MCF 10A (cell line): ENCODE measurements at regions of chr9 and their contacts with region 1.

Region 1: DNA sequence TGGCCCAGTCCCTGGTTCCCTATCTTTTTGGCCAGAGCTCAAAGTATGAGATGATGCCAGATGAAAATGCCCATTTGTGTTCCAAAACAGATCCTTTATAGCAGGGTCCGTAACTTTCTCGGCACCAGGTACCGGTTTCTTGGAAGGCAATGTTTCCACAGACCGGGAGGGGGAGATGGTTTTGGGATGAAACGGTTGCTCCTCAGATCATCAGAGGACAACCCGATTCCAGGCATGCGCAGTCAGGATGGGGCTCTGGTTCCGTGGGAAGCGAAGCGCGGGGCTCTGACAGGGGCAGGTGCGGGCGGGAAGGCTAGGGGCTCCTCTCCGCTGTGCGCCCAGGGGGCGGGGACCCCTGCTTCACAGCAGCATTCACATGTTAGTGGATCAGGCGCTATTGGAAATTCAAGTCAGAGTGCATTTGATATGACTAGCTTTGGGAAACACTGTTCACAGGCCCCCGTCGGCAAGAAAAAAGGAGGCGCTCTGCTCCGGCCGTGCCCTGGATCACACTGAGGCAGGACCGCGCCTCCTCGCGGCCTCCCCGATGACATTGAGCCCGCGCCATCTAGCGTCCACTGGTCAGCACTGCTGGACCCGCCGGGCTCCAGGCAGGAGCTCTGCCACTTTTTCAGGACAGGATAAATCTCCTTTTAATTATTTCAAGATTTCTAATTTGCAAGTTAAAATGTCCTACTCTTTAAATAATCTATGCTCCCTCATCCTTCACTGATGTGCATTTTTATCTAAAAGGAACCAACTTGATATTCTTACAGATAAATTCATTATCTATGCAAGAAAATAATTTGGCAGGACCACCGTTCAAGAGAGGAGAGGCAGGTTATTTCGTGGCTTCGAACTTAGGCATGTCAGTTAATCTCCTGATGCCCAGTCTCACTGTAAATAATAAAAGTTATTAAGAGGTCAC is 190.0 kb downstream of the FANCC start:
- DNase-seq: peak; percentile 81
- H3K4me3 Mint-ChIP-seq: no peak overlapping the region
- H3K27ac Mint-ChIP-seq: no peak overlapping the region
- H3K4me1 Mint-ChIP-seq: peaks cover 5% of the 10 kb centered on the region
- H3K27me3 Mint-ChIP-seq: no peaks in the 10 kb centered on the region
- CTCF ChIP-seq: peak; percentile 97

Region 2: DNA sequence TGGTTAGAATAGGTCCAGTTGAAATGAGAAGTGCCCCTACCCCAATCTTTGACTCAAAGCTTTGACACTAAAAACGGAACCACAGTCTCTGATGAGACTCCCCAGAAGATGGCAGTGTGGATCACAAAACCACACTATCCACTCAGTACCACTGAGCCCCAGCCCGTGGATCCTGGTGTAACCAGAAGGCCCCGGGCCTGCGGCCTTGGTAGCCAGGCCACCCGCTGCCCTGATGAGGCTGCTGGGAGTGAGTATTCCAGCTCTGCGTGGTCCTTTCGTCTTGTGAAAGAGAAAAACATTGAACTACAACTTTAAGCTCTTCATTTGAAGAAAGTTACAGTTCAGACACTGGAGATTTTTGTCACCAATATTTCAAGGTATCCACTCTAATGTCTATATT is 446.0 kb before region 1 on chr9:
- CTCF ChIA-PET with region 1: interaction called, 457 read pairs
- POLR2A ChIA-PET with region 1: interaction called, 31 read pairs
- intact Hi-C with region 1: loop called (anchors 1 kb)
- DNase-seq: peak; percentile 76
- H3K4me3 Mint-ChIP-seq: no peak overlapping the region
- H3K27ac Mint-ChIP-seq: no peak overlapping the region
- H3K4me1 Mint-ChIP-seq: no peaks in the 10 kb centered on the region
- H3K27me3 Mint-ChIP-seq: no peaks in the 10 kb centered on the region
- CTCF ChIP-seq: peak; percentile 81

Region 3: GRCh38 chr9:94761481-94761880 is 366.0 kb before region 1 on chr9:
- CTCF ChIA-PET with region 1: interaction called, 11 read pairs
- POLR2A ChIA-PET with region 1: no interaction called
- intact Hi-C with region 1: no loop called
- DNase-seq: peak; percentile 23
- H3K4me3 Mint-ChIP-seq: no peak overlapping the region
- H3K27ac Mint-ChIP-seq: peak overlapping the region; percentile 31
- H3K4me1 Mint-ChIP-seq: peaks cover 6% of the 10 kb centered on the region
- H3K27me3 Mint-ChIP-seq: no peaks in the 10 kb centered on the region
- CTCF ChIP-seq: no peak

Region 4: DNA sequence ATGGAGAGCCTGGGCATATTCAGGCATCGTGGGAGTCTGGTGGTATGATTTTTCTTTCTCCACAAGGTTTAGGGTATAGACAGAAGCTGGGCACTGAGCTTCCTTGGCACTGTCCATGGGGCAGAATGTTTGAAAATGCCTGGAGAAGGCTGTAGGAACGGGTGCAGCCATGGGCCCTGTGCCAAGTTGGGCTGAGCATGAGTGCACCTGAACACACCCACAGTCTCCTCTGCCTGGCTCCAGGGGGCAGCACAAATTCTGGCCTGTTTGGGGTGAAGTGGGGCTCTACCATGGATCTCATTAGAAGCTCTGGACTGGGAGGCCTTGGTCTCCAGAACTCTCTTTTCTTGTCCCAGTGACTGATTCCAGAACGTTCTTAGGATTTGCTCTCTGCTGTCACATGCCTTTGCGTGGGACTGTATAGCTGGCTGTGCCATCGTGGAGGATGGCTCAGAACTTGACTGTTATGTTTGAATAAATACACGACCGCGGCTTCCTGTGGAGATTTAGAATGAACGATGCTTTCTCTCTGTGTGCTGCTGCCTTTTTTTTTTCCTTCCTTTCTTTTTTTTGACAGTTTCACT is 39.8 kb before region 1 on chr9:
- CTCF ChIA-PET with region 1: interaction called, 14 read pairs
- POLR2A ChIA-PET with region 1: no interaction called
- intact Hi-C with region 1: no loop called
- DNase-seq: peak; percentile 60
- H3K4me3 Mint-ChIP-seq: no peak overlapping the region
- H3K27ac Mint-ChIP-seq: peak overlapping the region; percentile 39
- H3K4me1 Mint-ChIP-seq: peaks cover 19% of the 10 kb centered on the region
- H3K27me3 Mint-ChIP-seq: no peaks in the 10 kb centered on the region
- CTCF ChIP-seq: no peak

Region 5: GRCh38 chr9:95116003-95116807 is 11.3 kb before region 1 on chr9:
- CTCF ChIA-PET with region 1: interaction called, 94 read pairs
- POLR2A ChIA-PET with region 1: interaction called, 5 read pairs
- intact Hi-C with region 1: no loop called
- DNase-seq: peak; percentile 66
- H3K4me3 Mint-ChIP-seq: no peak overlapping the region
- H3K27ac Mint-ChIP-seq: peak overlapping the region; percentile 6
- H3K4me1 Mint-ChIP-seq: peaks cover 12% of the 10 kb centered on the region
- H3K27me3 Mint-ChIP-seq: no peaks in the 10 kb centered on the region
- CTCF ChIP-seq: peak; percentile 33

Region 6: GRCh38 chr9:95150903-95151302 is 23.4 kb after region 1 on chr9:
- CTCF ChIA-PET with region 1: interaction called, 22 read pairs
- POLR2A ChIA-PET with region 1: no interaction called
- intact Hi-C with region 1: no loop called
- DNase-seq: no peak
- H3K4me3 Mint-ChIP-seq: no peak overlapping the region
- H3K27ac Mint-ChIP-seq: no peak overlapping the region
- H3K4me1 Mint-ChIP-seq: no peaks in the 10 kb centered on the region
- H3K27me3 Mint-ChIP-seq: no peaks in the 10 kb centered on the region
- CTCF ChIP-seq: no peak